Head of caudate nucleus (tissue), 42 donors: ENCODE measurements at regions of chr9 and their contacts with region 1.

Region 1: DNA sequence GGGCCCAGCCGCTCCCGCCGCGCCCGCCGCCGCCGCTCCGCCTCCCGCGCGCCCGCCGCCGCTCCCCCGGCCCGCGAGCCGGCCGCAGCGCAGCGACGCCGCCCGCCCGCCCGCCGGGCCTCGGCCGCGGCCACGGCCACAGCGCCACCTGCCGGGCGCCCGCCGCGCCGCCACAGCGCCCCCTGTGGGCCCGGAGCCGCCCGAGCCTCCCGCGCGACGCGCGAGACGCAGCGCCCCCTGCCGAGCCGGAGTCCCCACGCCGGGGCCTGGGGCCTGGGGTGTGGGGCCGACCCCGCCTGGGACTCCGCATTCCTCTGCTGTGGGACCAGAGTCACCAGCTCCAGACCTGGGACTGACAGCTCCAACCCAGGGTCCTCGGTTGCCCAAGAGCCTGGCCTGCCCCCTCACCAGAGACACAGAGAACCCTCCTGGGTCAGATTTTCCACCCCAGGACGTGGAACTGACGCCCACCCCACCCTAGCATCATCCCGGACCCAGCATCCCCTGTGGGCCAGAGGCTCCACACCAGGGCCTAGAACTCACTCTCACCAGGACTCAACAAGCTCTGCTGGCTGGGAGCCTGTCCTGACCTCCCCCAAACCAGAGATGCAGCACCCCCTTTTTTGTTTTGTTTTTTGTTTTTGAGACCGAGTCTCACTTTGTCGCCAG is at the start of gene RAPGEF1:
- DNase-seq: peak in 40 of 42 donors; percentile 44 to 88 (median 76)

Region 2: GRCh38 chr9:131349881-131350563 is 390.1 kb before region 1 on chr9:
- intact Hi-C with region 1: loop called (anchors 10 kb)
- DNase-seq: peak; percentile 84 to 96 (median 91)

Region 3: GRCh38 chr9:131523451-131524435 is 216.4 kb before region 1 on chr9:
- intact Hi-C with region 1: loop called (anchors 10 kb)
- DNase-seq: peak in 20 of 42 donors; percentile 14 to 66 (median 54)

Region 4: GRCh38 chr9:131590908-131591844 is 148.9 kb before region 1 on chr9:
- intact Hi-C with region 1: loop called (anchors 5 kb)
- DNase-seq: peak; percentile 64 to 90 (median 80)

Region 5: GRCh38 chr9:132160802-132161742 is 421.0 kb after region 1 on chr9:
- intact Hi-C with region 1: no loop called
- DNase-seq: no peak